Mammary epithelial cell (primary cell): ENCODE measurements at regions of chr3 and their contacts with region 1.

Region 1: GRCh38 chr3:111071257-111072015 is at the start of gene NECTIN3:
- DNase-seq: peak; percentile 94
- H3K4me3 ChIP-seq: peak within 1 kb of the TSS; percentile 72 to 94 (median 75)
- H3K27ac ChIP-seq: peak within 1 kb of the TSS; percentile 29
- H3K4me1 ChIP-seq: peaks cover 9% of the 10 kb centered on the region
- H3K27me3 ChIP-seq: peaks cover 7% of the 10 kb centered on the region
- CTCF ChIP-seq: no peak
- total RNA-seq, gene NECTIN3: 11.6 to 12.5 TPM

Region 2: DNA sequence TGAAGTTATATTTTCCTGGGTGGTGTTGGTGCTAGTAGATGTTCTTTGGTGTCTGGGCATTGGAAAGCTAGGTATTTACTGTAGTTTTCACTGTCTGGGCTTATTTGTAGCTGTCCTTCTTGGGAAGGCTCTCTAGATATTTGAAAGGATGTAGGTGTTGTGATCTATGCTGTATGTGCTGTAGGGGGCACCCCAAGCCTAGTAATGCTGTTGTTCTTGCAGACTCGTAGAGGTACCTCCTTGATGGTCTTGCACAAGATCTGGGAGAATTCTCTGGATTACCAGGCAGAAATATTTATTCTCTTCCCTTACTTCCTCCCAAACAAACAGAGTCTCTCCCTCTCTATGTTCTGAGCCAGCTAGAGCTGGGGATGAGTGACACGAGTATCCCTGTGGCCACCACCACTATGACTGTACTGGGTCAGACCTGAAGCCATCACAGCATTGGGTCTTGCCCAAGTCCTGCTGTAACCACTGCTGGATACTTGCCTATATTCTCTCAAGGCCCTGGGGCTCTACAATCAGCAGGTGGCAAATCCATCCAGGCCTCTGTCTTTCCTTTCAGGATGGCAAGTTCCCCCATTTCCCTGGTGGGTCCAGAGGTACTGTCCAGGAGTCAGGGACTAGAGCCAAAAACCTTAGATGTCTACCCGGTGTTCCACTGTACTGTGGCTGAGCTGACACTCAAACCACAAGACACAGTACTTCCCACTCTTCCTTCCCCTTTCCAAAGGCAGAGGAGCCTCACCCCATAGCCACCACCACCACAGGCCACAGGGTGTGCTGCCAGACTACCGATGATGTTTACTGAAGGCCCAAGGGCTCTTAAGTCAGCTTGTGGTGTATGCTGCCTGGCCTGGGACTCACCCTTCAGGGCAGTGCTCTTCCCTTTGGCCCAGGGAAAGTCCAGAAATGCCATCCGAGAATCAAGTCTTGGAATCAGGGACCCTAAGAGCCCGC is 1538.9 kb before region 1 on chr3:
- CTCF ChIA-PET with region 1: no interaction called
- dilution Hi-C with region 1: no loop called
- in situ Hi-C with region 1: no loop called
- intact Hi-C with region 1: loop called (anchors 2 kb)
- DNase-seq: peak; percentile 69
- H3K4me3 ChIP-seq: no peak overlapping the region
- H3K27ac ChIP-seq: no peak overlapping the region
- H3K4me1 ChIP-seq: no peaks in the 10 kb centered on the region
- H3K27me3 ChIP-seq: no peaks in the 10 kb centered on the region
- CTCF ChIP-seq: peak; percentile 18 to 60

Region 3: GRCh38 chr3:109806929-109807328 is 1264.5 kb before region 1 on chr3:
- CTCF ChIA-PET with region 1: no interaction called
- dilution Hi-C with region 1: no loop called
- in situ Hi-C with region 1: no loop called
- intact Hi-C with region 1: loop called (anchors 10 kb)
- DNase-seq: peak; percentile 78
- H3K4me3 ChIP-seq: no peak overlapping the region
- H3K27ac ChIP-seq: peak overlapping the region; percentile 14
- H3K4me1 ChIP-seq: peaks cover 27% of the 10 kb centered on the region
- H3K27me3 ChIP-seq: no peaks in the 10 kb centered on the region
- CTCF ChIP-seq: no peak

Region 4: DNA sequence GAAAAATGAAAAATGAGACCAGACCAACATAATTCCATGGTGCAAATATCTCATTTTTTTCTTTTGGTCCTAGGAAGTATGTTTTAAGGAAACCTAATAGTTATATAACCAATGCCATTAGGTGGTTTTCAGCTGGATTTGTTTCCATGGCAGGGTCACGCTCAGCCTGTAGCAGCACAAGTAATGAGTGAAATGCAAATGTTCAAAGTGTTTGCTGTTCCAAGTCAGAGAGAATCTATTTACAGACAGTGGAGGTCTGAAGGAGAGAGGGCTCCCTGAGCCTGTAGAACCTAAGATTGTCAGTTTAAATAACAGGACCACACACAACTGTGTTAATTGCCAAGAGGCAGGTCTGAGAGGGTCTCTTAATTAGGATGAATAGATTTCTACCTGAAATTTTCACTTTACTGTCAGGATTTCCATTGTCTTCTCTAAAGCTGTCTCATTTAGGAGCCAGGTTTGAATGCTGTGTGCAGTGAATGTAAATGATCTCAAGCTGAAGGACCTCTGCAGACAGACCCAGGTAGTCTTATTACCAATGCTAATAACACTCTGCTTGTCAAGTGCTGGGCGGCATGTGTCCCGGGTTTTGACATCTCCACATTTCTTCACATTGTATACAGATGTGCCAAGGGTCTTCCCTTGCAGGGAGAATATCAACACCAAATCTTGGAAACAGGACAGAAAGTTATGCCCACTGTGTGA is 317.1 kb before region 1 on chr3:
- CTCF ChIA-PET with region 1: no interaction called
- dilution Hi-C with region 1: no loop called
- in situ Hi-C with region 1: no loop called
- intact Hi-C with region 1: no loop called
- DNase-seq: no peak
- H3K4me3 ChIP-seq: no peak overlapping the region
- H3K27ac ChIP-seq: no peak overlapping the region
- H3K4me1 ChIP-seq: no peaks in the 10 kb centered on the region
- H3K27me3 ChIP-seq: no peaks in the 10 kb centered on the region
- CTCF ChIP-seq: no peak

Region 5: DNA sequence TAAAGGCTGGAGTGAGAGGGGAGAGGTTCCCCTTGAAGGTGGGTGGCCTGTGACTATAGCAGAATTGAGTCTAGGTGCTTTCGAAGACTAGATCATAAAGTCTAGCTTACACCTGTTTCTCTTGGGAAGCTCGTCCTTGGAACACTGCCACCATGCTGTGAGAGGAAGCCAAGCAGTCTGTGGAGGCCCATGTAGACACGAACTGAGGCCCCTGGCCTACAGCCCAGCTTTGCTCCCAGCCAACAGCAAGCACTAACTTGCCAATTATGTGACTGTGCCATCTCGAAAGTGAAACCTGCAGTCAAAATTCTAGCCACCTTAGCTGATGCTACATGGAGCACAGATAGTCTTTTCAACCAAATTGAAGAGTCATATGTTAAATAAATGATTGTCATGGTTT is 190.4 kb before region 1 on chr3:
- CTCF ChIA-PET with region 1: no interaction called
- dilution Hi-C with region 1: no loop called
- in situ Hi-C with region 1: no loop called
- intact Hi-C with region 1: loop called (anchors 10 kb)
- DNase-seq: peak; percentile 79
- H3K4me3 ChIP-seq: no peak overlapping the region
- H3K27ac ChIP-seq: no peak overlapping the region
- H3K4me1 ChIP-seq: no peaks in the 10 kb centered on the region
- H3K27me3 ChIP-seq: no peaks in the 10 kb centered on the region
- CTCF ChIP-seq: peak; percentile 53 to 66

Region 6: GRCh38 chr3:111539351-111540331 is 468.2 kb after region 1 on chr3:
- CTCF ChIA-PET with region 1: no interaction called
- dilution Hi-C with region 1: no loop called
- in situ Hi-C with region 1: no loop called
- intact Hi-C with region 1: loop called (anchors 5 kb)
- DNase-seq: peak; percentile 55
- H3K4me3 ChIP-seq: no peak overlapping the region
- H3K27ac ChIP-seq: no peak overlapping the region
- H3K4me1 ChIP-seq: peaks cover 21% of the 10 kb centered on the region
- H3K27me3 ChIP-seq: no peaks in the 10 kb centered on the region
- CTCF ChIP-seq: peak; percentile 92 to 94